ENCODE measurements at regions of chr20 and their contacts with region 1.

Region 1: GRCh38 chr20:3811467-3812258 is 8.7 kb upstream of the AP5S1 start:
- DNase-seq: peak; percentile 91
- H3K4me3 ChIP-seq: peak overlapping the region; percentile 38
- CTCF ChIP-seq: no peak

Region 2: DNA sequence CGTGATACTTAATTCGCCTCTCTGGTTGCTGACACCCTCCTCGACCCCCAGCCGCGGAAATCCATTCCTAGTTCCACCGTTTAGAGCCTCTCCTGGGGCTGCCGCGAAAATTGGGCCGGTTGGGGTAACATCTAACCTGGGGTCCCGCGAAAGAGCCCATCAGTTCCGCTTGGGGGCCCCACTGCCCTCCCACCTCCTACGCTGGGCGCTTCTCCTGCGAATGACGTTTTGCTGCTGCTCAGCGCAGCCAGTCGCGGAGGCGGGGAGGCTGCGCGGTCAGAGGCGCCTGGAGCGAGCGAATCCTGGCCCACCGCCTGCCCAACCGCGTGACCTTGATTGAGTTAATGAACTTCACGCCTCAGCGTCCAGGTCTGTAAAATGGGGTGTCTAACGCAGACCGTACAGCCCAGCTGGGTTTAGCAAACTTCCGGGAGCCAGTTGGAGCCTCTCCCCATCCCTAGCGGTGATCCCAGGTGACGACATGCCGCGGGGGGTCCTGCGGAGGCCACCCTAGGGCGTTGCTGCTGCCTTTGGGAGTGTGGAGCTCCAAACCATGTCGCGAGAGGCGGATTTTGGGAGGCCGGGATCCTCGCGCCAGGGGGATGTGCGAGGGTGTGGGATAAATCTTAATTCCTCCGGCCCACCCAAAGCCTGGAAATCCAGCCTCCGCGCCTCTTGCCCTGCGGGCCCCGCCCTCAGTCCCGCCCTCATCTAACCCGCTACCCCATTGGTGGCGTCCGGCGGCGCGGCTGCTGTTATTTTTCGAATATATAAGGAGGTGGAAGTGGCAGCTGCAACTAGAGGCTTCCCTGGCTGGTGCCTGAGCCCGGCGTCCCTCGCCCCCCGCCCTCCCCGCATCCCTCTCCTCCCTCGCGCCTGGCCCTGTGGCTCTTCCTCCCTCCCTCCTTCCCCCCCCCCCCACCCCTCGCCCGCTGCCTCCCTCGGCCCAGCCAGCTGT is 15.9 kb before region 1 on chr20 and contains the start of gene CDC25B:
- CTCF ChIA-PET with region 1: interaction called, 255 read pairs
- POLR2A ChIA-PET with region 1: interaction called, 3 read pairs
- DNase-seq: no peak
- H3K4me3 ChIP-seq: peak within 1 kb of the TSS; percentile 84
- CTCF ChIP-seq: peak; percentile 46

Region 3: GRCh38 chr20:4006640-4007039 is 195.0 kb after region 1 on chr20:
- CTCF ChIA-PET with region 1: no interaction called
- POLR2A ChIA-PET with region 1: no interaction called
- DNase-seq: no peak
- H3K4me3 ChIP-seq: no peak overlapping the region
- CTCF ChIP-seq: no peak